ENCODE measurements at regions of chr2 and their contacts with region 1.

Region 1: GRCh38 chr2:56009758-56010458 is 86.3 kb upstream of the EFEMP1 start:
- DNase-seq: peak; percentile 81
- H3K4me3 ChIP-seq: no peak overlapping the region
- H3K27ac ChIP-seq: peak overlapping the region; percentile 100
- H3K4me1 ChIP-seq: peaks cover 73% of the 10 kb centered on the region
- H3K27me3 ChIP-seq: no peaks in the 10 kb centered on the region
- CTCF ChIP-seq: peak; percentile 37
- POLR2A ChIP-seq: no peak

Region 2: DNA sequence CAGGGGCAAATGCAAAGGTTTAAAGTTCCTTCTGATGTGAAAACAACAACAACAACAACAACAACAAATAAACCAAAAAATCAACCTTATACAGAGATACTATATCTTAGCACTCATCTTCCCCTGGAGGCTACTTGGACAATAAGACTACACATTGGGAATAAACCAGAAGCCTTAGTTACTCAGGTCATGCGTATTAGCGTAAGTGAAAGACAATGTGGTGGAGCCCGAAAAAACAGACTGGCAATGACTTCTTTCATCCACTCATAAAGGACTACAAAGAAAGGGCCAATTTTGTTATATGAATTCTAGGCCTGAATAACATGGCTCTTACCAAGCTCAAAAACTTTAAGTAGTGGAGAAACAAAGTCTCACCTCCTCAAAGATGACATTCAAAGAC is 373.1 kb before region 1 on chr2:
- CTCF ChIA-PET with region 1: no interaction called
- POLR2A ChIA-PET with region 1: no interaction called
- dilution Hi-C with region 1: no loop called
- intact Hi-C with region 1: no loop called
- DNase-seq: no peak
- H3K4me3 ChIP-seq: no peak overlapping the region
- H3K27ac ChIP-seq: no peak overlapping the region
- H3K4me1 ChIP-seq: no peaks in the 10 kb centered on the region
- H3K27me3 ChIP-seq: no peaks in the 10 kb centered on the region
- CTCF ChIP-seq: no peak
- POLR2A ChIP-seq: no peak

Region 3: DNA sequence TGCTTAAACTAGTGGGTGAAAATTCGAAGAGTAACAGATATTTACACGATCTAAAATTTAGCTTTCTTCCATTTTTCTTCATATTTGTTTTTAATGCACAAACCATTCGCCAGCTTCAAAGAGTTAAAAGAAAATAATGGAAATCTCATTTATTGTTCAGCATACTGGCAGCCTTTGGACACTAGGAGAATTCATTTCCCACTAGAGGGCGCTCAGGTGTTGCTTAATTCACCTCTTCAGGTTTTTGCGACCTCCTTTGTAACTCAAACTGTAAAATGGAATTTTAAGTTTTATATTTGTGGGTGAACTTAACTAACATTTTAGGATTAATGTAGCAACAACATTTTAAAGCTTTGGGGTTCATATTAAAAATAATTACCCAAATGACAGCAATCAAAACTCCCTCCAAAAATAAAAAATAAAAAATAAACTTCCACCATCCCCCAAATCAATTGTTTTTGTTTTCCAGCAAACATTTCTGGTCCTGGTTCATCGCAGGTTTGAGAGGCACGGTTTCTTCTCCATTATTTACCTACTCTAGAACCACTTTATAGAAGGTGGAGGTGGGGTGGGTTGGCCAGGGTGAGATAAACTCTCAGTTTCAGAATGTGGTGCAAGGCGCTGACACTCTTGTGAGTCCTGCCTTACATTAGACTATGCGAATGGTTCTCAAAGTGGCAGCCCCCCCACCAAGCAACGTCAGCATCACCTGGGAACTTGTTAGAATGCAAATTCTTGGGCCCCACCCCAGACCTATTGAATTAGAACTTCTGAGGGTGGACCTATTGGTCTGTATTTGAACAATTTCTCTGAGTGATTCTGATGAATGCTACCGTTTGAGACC is 291.5 kb before region 1 on chr2:
- CTCF ChIA-PET with region 1: interaction called, 3 read pairs
- POLR2A ChIA-PET with region 1: no interaction called
- dilution Hi-C with region 1: no loop called
- intact Hi-C with region 1: loop called (anchors 1 kb)
- DNase-seq: peak; percentile 77
- H3K4me3 ChIP-seq: no peak overlapping the region
- H3K27ac ChIP-seq: no peak overlapping the region
- H3K4me1 ChIP-seq: peaks cover 7% of the 10 kb centered on the region
- H3K27me3 ChIP-seq: no peaks in the 10 kb centered on the region
- CTCF ChIP-seq: peak; percentile 55 to 65
- POLR2A ChIP-seq: no peak

Region 4: GRCh38 chr2:55885129-55885943 is 124.6 kb before region 1 on chr2:
- CTCF ChIA-PET with region 1: interaction called, 4 read pairs
- POLR2A ChIA-PET with region 1: interaction called, 5 read pairs
- dilution Hi-C with region 1: no loop called
- intact Hi-C with region 1: loop called (anchors 1 kb)
- DNase-seq: peak; percentile 95
- H3K4me3 ChIP-seq: no peak overlapping the region
- H3K27ac ChIP-seq: peak overlapping the region; percentile 97
- H3K4me1 ChIP-seq: peaks cover 96% of the 10 kb centered on the region
- H3K27me3 ChIP-seq: no peaks in the 10 kb centered on the region
- CTCF ChIP-seq: no peak
- POLR2A ChIP-seq: peak; percentile 88

Region 5: GRCh38 chr2:55923091-55923981 is 86.6 kb before region 1 on chr2 and contains the start of gene EFEMP1:
- CTCF ChIA-PET with region 1: interaction called, 6 read pairs
- POLR2A ChIA-PET with region 1: interaction called, 7 read pairs
- dilution Hi-C with region 1: no loop called
- intact Hi-C with region 1: loop called (anchors 1 kb)
- DNase-seq: peak; percentile 87
- H3K4me3 ChIP-seq: peak within 1 kb of the TSS; percentile 57 to 97 (median 91)
- H3K27ac ChIP-seq: peak within 1 kb of the TSS; percentile 82
- H3K4me1 ChIP-seq: peaks cover 43% of the 10 kb centered on the region
- H3K27me3 ChIP-seq: no peaks in the 10 kb centered on the region
- CTCF ChIP-seq: peak in 1 of 2 donors; percentile 4
- POLR2A ChIP-seq: peak; percentile 96
- total RNA-seq, gene EFEMP1: 2,354 and 2,981 TPM in 2 replicates

Region 6: DNA sequence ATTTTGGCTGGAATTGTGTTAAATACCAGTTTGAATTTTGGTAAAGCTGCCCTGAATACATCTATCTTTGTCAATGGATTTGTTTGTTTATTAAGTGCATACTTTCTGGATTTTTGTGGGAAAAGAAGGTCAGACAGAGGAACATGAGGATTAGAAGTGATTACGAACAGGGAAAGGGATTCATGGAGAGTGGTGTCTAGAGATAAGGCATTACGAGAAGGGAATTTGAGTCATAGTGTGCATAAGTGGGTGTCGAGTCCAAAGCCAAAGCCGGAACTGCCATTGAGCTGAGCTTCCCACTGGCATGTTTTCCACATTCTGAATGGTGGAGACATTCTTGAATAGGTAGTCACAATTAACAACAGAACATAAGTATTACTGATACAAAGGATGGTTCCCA is 17.4 kb before region 1 on chr2:
- CTCF ChIA-PET with region 1: interaction called, 12 read pairs
- POLR2A ChIA-PET with region 1: interaction called, 15 read pairs
- dilution Hi-C with region 1: no loop called
- intact Hi-C with region 1: loop called (anchors 1 kb)
- DNase-seq: peak; percentile 100
- H3K4me3 ChIP-seq: no peak overlapping the region
- H3K27ac ChIP-seq: peak overlapping the region; percentile 97
- H3K4me1 ChIP-seq: peaks cover 62% of the 10 kb centered on the region
- H3K27me3 ChIP-seq: no peaks in the 10 kb centered on the region
- CTCF ChIP-seq: no peak
- POLR2A ChIP-seq: peak; percentile 70

Measured in endothelial cell of umbilical vein (primary cell).